Left ventricle myocardium superior (tissue), 1 donor: ENCODE measurements at regions of chr5 and their contacts with region 1.

Region 1: DNA sequence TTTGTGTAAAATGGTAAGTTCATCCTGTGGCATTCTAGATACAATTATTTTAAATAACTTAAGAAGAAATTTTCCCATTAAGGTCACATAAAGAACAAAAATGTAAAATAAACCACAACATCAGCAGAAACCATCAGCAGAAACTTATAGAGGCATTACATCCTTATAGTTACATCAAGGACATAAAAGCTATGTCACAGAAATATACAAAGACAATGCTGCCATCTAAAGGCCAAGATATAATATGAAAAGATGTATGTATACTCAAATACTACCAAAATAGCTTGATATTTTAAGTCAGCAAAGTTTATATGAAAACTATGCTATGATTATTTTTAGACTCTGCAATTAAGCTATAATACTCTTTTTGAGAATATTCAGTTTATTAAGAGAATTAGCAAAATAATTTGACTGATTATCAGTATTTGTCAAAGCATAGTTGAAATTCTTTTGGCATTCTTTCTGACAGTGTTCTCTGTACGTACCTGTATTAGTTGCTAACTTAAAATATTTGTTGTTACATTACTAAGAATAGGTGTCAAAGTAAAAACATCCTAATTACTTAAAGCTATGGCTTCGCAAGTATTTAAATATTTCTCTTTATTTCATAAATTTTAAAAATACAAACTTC is 36.2 kb downstream of the FBXL17 start:
- DNase-seq: no peak
- ATAC-seq: no peak

Region 2: GRCh38 chr5:108148715-108149139 is 196.9 kb before region 1 on chr5:
- intact Hi-C with region 1: loop called (anchors 10 kb)
- DNase-seq: no peak
- ATAC-seq: peak; percentile 71

Region 3: DNA sequence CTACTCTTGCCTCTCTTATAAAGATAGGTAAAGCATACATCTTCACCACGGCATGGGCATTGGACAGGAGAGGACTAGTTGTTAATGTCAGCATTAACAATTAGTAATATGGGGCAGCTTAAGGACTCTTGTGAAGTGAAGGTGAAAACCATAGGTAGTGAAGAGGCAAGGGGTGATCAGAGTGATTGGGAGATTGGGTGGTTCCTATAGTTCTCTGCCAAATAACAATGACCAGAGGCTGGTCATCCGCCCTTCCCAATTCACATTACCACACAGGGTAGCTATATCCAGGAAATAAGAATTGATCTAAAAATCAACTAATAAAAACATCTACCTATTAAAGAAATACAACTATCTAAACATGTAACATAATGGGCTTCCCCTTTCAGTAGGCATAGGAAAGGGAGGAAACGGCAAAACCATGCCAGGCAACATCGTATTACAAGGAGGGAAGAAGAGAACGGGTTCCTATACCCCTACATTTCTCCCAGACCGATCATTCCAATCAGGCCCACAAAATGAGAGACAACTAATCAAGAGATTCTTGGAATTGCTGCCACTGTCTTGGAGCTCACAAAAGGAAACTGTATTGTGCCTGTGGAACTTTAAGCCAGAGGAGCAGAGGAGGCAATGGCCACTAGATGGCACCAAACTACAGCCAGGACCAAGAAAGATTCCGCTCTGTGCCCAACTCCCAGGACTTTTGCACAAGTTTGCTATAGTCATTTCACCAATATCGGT is 85.4 kb before region 1 on chr5:
- intact Hi-C with region 1: loop called (anchors 5 kb)
- DNase-seq: peak; percentile 53
- ATAC-seq: peak; percentile 95